Dorsolateral prefrontal cortex (tissue), 120 donors: ENCODE measurements at regions of chr6 and their contacts with region 1.

Region 1: GRCh38 chr6:31862344-31863227 is at the start of gene NEU1:
- DNase-seq: peak; percentile 100
- H3K4me3 ChIP-seq: peak within 1 kb of the TSS; percentile 54 to 99 (median 89)
- H3K27ac ChIP-seq: peak within 1 kb of the TSS; percentile 38 to 96 (median 87)
- H3K27me3 ChIP-seq: no peaks in the 10 kb centered on the region
- CTCF ChIP-seq: peak in 13 of 56 donors; percentile 8 to 44 (median 28)
- total RNA-seq, gene NEU1: 16.0 to 38.4 (median 27.6) TPM

Region 2: GRCh38 chr6:30870546-30870945 is 992.0 kb before region 1 on chr6:
- intact Hi-C with region 1: no loop called
- DNase-seq: no peak
- H3K4me3 ChIP-seq: no peak overlapping the region
- H3K27ac ChIP-seq: no peak overlapping the region
- H3K27me3 ChIP-seq: peaks cover 0 to 2% (median 0%) of the 10 kb centered on the region in 45 donors
- CTCF ChIP-seq: no peak

Region 3: GRCh38 chr6:31285486-31285885 is 577.1 kb before region 1 on chr6:
- intact Hi-C with region 1: no loop called
- DNase-seq: no peak
- H3K4me3 ChIP-seq: no peak overlapping the region
- H3K27ac ChIP-seq: no peak overlapping the region
- H3K27me3 ChIP-seq: peaks cover 0 to 13% (median 0%) of the 10 kb centered on the region in 45 donors
- CTCF ChIP-seq: no peak

Region 4: DNA sequence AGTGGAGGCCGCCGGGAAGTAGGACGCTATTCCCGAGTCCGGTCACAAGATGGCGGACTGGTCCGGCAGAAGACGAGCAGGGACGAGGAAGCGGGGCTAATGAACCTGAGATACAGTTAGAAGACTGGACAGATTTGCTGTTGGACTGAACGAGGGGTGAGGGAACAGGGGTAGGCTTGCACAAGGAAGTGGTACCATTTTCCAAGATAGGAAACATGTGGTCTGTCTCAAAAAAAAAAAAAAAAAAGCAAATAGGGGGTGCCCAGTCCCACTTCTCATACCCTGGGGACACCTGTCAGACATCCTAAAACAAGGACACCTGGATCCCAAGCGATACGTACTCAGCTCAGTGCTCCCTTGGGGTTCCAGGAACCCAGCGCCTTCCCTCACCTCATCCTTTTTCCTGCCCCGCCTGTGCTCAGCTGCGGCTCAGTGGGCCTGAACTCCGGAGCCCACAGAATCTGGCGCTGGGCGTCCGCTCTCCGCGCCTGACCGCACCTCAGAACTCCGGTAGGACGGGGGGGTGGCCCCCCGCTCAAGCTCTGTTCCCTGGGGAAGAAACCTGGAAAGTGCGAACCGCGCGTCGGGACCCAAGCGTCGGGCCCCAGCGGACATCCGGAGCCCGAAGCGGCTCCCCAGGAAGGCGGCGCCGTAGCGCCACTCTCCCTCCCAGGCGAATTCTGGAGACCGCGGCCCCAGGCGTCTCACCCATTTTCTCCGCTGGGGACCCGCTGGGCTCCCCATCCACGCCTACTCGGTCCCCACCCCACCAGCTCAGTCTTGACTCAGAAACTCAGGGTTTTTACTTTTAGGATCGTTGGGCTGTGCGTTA is 181.5 kb before region 1 on chr6 and contains the start of gene LY6G5C:
- intact Hi-C with region 1: loop called in 1 of 2 experiments (anchors 10 kb)
- DNase-seq: peak; percentile 64 to 86 (median 84)
- H3K4me3 ChIP-seq: peak within 1 kb of the TSS; percentile 43 to 84 (median 66)
- H3K27ac ChIP-seq: peak within 1 kb of the TSS in 56 of 59 donors; percentile 17 to 91 (median 72)
- H3K27me3 ChIP-seq: no peaks in the 10 kb centered on the region
- CTCF ChIP-seq: peak; percentile 47 to 86 (median 75)
- total RNA-seq, gene LY6G5C: 1.3 to 14.3 (median 6.4) TPM

Region 5: GRCh38 chr6:31739639-31740396 is 122.8 kb before region 1 on chr6 and contains the start of gene MSH5:
- intact Hi-C with region 1: loop called in 1 of 2 experiments (anchors 10 kb)
- DNase-seq: peak; percentile 95 to 99 (median 98)
- H3K4me3 ChIP-seq: peak within 1 kb of the TSS; percentile 48 to 91 (median 80)
- H3K27ac ChIP-seq: peak within 1 kb of the TSS in 31 of 59 donors; percentile 6 to 80 (median 51)
- H3K27me3 ChIP-seq: peaks cover 0 to 11% (median 0%) of the 10 kb centered on the region in 45 donors
- CTCF ChIP-seq: peak in 11 of 56 donors; percentile 14 to 37 (median 21)
- total RNA-seq, gene MSH5: 0.83 to 23.4 (median 9.7) TPM

Region 6: GRCh38 chr6:31834434-31835198 is 28.0 kb before region 1 on chr6:
- intact Hi-C with region 1: loop called in 1 of 2 experiments (anchors 1 kb)
- DNase-seq: peak; percentile 77 to 89 (median 86)
- H3K4me3 ChIP-seq: peak overlapping the region; percentile 72 to 100 (median 94)
- H3K27ac ChIP-seq: peak overlapping the region; percentile 79 to 99 (median 97)
- H3K27me3 ChIP-seq: no peaks in the 10 kb centered on the region
- CTCF ChIP-seq: peak in 26 of 56 donors; percentile 5 to 48 (median 22)